Dorsolateral prefrontal cortex (tissue), 120 donors: ENCODE measurements at regions of chr10 and their contacts with region 1.

Region 1: DNA sequence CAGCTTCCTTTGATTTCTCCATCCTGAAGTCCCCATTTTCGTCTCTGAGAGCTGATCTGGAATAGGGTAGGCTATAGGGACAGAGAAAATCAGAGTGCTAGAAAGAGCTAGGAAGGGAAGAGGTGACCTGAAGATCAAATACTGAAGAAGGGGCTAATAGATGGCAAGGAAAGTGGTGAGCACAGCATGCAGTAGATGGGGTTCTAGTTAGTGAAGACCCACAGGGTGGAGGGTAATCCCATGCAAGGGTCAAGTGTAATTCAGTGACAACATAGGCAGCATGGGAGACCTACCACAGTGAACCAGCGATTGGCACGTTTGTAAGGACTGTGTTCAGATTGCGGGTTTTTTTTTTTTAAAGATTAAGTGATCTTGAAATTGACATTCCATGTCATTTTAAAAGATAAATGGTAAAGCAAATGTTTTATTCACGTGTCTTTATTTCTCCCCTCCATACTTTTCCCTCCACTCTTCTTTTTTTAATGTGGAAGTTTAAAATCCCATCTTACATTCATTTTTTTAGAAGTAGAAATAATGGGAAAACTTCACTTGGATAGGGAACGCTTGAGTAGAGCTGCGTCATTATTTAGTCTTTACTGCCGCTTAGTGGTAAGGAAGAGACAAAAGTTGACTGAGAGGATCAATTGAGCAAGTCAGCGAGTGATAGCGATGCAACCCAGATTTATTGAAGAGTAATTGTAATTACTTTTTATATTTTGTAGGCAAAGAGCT is 21.0 kb upstream of the ABI1 start:
- DNase-seq: no peak
- H3K4me3 ChIP-seq: peak overlapping the region in 35 of 59 donors; percentile 0 to 52 (median 24)
- H3K27ac ChIP-seq: no peak overlapping the region
- H3K27me3 ChIP-seq: peaks cover 0 to 6% (median 0%) of the 10 kb centered on the region in 45 donors
- CTCF ChIP-seq: peak; percentile 37 to 93 (median 76)

Region 2: GRCh38 chr10:26682931-26683330 is 198.8 kb before region 1 on chr10:
- intact Hi-C with region 1: loop called in 1 of 2 experiments (anchors 5 kb)
- DNase-seq: no peak
- H3K4me3 ChIP-seq: no peak overlapping the region
- H3K27ac ChIP-seq: no peak overlapping the region
- H3K27me3 ChIP-seq: peaks cover 0 to 13% (median 0%) of the 10 kb centered on the region in 45 donors
- CTCF ChIP-seq: no peak

Region 3: GRCh38 chr10:26706206-26706605 is 175.6 kb before region 1 on chr10:
- intact Hi-C with region 1: no loop called
- DNase-seq: no peak
- H3K4me3 ChIP-seq: no peak overlapping the region
- H3K27ac ChIP-seq: no peak overlapping the region
- H3K27me3 ChIP-seq: no peaks in the 10 kb centered on the region
- CTCF ChIP-seq: no peak

Region 4: DNA sequence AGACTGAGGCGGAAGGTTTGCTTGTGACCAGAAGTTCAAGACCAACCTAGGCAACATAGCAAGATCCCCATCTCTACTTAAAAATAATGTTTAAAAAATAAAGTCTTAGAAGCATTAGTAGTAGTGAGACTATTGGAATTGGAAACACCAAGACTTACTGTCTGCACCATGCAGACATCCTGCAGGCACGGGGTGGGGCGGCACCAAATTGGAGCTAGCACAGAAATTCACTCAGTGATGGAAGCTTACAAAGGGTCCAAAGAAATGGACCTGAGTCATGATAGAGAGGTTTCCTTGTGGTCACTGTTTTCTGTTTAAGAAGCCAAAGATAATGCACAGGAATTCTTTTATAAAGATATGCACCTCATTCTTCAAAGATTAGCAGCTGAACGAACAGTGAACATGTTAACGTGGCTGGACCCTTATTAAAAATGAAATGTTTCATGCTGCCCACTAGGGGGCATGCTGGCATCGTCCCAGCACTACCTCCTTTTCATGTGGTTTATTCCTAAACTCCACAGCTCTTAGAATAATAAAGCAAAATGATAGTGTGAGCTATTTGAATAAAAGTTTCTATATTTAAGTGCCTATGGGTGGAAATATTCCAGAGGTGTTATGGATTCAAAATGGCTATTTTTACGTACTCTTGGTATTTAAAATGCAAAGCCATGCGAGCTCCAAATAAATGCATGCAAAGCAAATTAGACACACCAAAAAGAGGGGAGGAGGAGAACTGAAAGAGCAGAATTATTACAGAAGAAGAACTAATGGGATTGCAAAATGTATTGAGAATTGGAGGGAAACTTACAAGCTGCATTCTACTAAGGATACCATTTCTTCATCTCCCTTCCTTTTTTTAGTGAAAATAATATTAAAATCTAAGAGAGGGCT is 155.7 kb before region 1 on chr10:
- intact Hi-C with region 1: loop called (anchors 2 to 5 kb)
- DNase-seq: peak in 9 of 10 donors; percentile 49 to 77 (median 67)
- H3K4me3 ChIP-seq: no peak overlapping the region
- H3K27ac ChIP-seq: peak overlapping the region in 46 of 59 donors; percentile 1 to 78 (median 48)
- H3K27me3 ChIP-seq: no peaks in the 10 kb centered on the region
- CTCF ChIP-seq: peak; percentile 75 to 98 (median 88)